ENCODE measurements at regions of chr15 and their contacts with region 1.

Region 1: GRCh38 chr15:38610748-38611147 is 46.1 kb upstream of the RASGRP1 start:
- DNase-seq: peak; percentile 49
- H3K4me3 Mint-ChIP-seq: peak overlapping the region; percentile 73
- H3K27ac Mint-ChIP-seq: peak overlapping the region; percentile 98
- H3K4me1 Mint-ChIP-seq: peaks cover 78% of the 10 kb centered on the region
- H3K27me3 Mint-ChIP-seq: no peaks in the 10 kb centered on the region

Region 2: DNA sequence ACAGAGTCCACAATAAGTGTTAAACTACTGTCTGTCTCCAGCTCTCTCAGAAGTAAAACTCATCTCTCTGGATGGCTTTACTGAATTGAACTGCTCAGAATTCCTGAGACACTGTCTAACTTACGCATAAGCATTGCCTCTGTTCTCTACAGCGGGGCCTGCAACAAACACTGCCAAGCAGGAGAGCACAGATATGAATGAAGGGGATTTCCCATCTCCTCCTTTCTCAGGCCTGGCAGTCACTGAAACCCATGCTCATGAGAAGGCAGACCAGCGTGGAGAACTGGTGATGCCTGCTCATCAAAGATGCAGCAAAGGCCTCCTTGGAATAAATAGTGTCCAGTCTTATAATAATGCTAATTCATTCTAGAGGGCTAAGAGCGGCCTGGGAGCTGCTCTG is 56.4 kb before region 1 on chr15:
- intact Hi-C with region 1: loop called (anchors 1 kb)
- DNase-seq: no peak
- H3K4me3 Mint-ChIP-seq: peak overlapping the region; percentile 96
- H3K27ac Mint-ChIP-seq: peak overlapping the region; percentile 93
- H3K4me1 Mint-ChIP-seq: peaks cover 87% of the 10 kb centered on the region
- H3K27me3 Mint-ChIP-seq: no peaks in the 10 kb centered on the region

Region 3: GRCh38 chr15:38631126-38632075 is 20.7 kb after region 1 on chr15:
- intact Hi-C with region 1: loop called (anchors 1 kb)
- DNase-seq: no peak
- H3K4me3 Mint-ChIP-seq: peak overlapping the region; percentile 62
- H3K27ac Mint-ChIP-seq: peak overlapping the region; percentile 91
- H3K4me1 Mint-ChIP-seq: peaks cover 63% of the 10 kb centered on the region
- H3K27me3 Mint-ChIP-seq: no peaks in the 10 kb centered on the region

Region 4: GRCh38 chr15:38671675-38672254 is 61.0 kb after region 1 on chr15:
- intact Hi-C with region 1: loop called (anchors 1 kb)
- DNase-seq: peak; percentile 65
- H3K4me3 Mint-ChIP-seq: peak overlapping the region; percentile 59
- H3K27ac Mint-ChIP-seq: peak overlapping the region; percentile 93
- H3K4me1 Mint-ChIP-seq: peaks cover 79% of the 10 kb centered on the region
- H3K27me3 Mint-ChIP-seq: no peaks in the 10 kb centered on the region

Region 5: DNA sequence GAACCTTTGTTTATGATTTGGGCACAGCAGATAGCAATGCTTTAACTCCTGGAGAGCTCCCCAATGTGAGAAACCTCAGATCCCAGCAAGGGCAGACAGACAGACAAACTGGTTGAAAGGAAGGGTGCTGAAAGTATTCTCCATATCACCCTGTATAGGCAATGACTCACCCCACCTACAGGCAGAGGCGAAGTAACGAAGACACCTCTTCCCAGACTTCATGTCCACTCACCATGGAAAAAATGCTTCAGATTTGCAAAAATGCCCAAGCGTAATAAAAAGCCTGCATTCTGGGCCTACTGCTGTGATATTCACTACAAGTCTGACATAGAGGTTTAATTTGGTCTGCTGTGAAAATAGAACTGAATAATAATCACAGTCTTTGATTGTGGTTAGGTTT is 1020.6 kb after region 1 on chr15:
- intact Hi-C with region 1: loop called (anchors 2 kb)
- DNase-seq: no peak
- H3K4me3 Mint-ChIP-seq: peak overlapping the region; percentile 77
- H3K27ac Mint-ChIP-seq: peak overlapping the region; percentile 95
- H3K4me1 Mint-ChIP-seq: peaks cover 51% of the 10 kb centered on the region
- H3K27me3 Mint-ChIP-seq: no peaks in the 10 kb centered on the region